Sigmoid colon (tissue), 7 donors: ENCODE measurements at regions of chr3 and their contacts with region 1.

Region 1: GRCh38 chr3:171284308-171285075 is 175.7 kb downstream of the TNIK start:
- DNase-seq: peak; percentile 79
- H3K4me3 ChIP-seq: no peak overlapping the region
- H3K27ac ChIP-seq: peak overlapping the region; percentile 59 to 81 (median 76)
- H3K4me1 ChIP-seq: peaks cover 0 to 65% (median 56%) of the 10 kb centered on the region in 4 donors
- H3K27me3 ChIP-seq: no peaks in the 10 kb centered on the region
- CTCF ChIP-seq: no peak
- EP300 ChIP-seq: no peak
- POLR2A ChIP-seq: no peak

Region 2: DNA sequence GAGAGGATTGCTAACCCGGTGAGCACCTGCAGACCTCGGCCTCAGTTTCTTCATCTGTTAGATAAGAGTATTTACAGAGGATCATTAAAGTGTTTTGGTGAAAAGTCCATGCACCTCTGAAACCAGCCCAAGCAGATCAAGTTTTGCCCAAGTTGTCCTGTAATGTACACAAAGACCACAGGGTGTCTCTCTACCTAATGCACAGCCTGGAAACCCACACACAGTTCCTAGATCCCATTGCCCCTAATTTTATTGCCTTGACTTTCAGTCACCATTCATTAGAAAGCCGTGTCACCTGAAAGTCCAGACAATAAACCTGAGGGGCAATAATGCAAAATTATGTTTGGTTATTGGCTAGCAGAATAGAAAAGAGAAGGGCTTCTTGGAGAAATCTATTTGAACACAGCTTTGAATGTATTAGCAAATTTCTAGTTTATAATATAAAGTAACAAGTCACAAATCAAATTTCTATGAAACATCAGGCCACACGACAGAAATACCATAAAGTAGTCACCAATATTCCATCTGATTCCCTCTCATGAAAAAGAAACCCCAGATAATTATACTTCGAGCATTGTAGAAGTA is 96.7 kb before region 1 on chr3:
- intact Hi-C with region 1: loop called (anchors 10 kb)
- DNase-seq: no peak
- H3K4me3 ChIP-seq: no peak overlapping the region
- H3K27ac ChIP-seq: no peak overlapping the region
- H3K4me1 ChIP-seq: peaks cover 0 to 20% (median 17%) of the 10 kb centered on the region in 4 donors
- H3K27me3 ChIP-seq: no peaks in the 10 kb centered on the region
- CTCF ChIP-seq: peak; percentile 37 to 53 (median 48)
- EP300 ChIP-seq: no peak
- POLR2A ChIP-seq: no peak

Region 3: GRCh38 chr3:171328419-171329082 is 44.1 kb after region 1 on chr3:
- intact Hi-C with region 1: loop called (anchors 5 kb)
- DNase-seq: no peak
- H3K4me3 ChIP-seq: no peak overlapping the region
- H3K27ac ChIP-seq: peak overlapping the region in 2 of 4 donors; percentile 61 to 63
- H3K4me1 ChIP-seq: peaks cover 0 to 47% (median 43%) of the 10 kb centered on the region in 4 donors
- H3K27me3 ChIP-seq: no peaks in the 10 kb centered on the region
- CTCF ChIP-seq: no peak
- EP300 ChIP-seq: no peak
- POLR2A ChIP-seq: no peak

Region 4: DNA sequence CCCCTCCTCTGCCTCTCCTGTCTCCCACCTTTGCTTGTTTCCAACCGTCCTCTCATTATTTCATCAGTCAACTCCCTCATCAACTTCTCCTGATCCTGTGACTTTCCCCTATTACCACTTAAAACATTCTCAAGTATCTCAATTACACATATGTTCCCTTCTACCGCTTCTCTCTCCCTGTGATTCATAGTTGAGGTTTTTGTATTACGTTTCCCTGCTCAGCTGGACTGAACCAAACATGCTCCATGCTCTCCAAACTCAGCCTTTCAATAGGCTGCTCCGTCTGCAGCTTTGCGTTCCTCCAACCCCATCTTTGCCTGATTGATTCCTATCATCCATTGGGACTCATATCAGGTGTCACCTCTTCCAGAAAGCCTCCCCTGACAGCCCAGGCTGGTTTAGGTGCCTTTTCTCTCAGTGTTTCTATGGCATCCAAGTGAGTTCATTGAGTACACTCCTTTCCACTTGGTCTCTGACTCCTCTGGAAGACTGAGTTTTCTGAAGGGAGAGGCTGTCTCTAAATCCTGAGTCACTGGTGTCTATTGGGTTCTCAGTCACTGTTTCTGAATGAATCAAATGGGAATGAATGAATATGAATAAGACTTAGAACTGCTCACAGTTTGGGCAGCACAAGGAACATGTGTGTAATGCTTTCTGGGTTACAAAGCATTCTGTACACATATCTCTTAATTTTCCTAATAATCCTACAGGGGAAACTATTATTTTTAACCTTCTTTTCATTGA is 469.3 kb after region 1 on chr3:
- intact Hi-C with region 1: no loop called
- DNase-seq: no peak
- H3K4me3 ChIP-seq: no peak overlapping the region
- H3K27ac ChIP-seq: no peak overlapping the region
- H3K4me1 ChIP-seq: peaks cover 0 to 4% (median 2%) of the 10 kb centered on the region in 4 donors
- H3K27me3 ChIP-seq: no peaks in the 10 kb centered on the region
- CTCF ChIP-seq: no peak
- EP300 ChIP-seq: no peak
- POLR2A ChIP-seq: no peak